H1 (cell line): ENCODE measurements at regions of chr16 and their contacts with region 1.

Region 1: GRCh38 chr16:1923299-1924034 is 5.3 kb upstream of the HS3ST6 start:
- DNase-seq: peak; percentile 49 to 86
- H3K4me3 ChIP-seq: peak overlapping the region in 1 of 4 experiments; percentile 47; a peak in 4 of 8 replicates
- H3K27ac ChIP-seq: no peak overlapping the region
- H3K4me1 ChIP-seq: peaks cover 4 to 23% (median 15%) of the 10 kb centered on the region in 4 experiments
- H3K27me3 ChIP-seq: peaks cover 23 to 62% (median 45%) of the 10 kb centered on the region in 4 experiments
- CTCF ChIP-seq: peak; percentile 56 to 66 (median 59)
- EP300 ChIP-seq: no peak
- POLR2A ChIP-seq: no peak
- RAD21 ChIP-seq: peak; percentile 28 to 45; a peak in 2 of 4 replicates

Region 2: DNA sequence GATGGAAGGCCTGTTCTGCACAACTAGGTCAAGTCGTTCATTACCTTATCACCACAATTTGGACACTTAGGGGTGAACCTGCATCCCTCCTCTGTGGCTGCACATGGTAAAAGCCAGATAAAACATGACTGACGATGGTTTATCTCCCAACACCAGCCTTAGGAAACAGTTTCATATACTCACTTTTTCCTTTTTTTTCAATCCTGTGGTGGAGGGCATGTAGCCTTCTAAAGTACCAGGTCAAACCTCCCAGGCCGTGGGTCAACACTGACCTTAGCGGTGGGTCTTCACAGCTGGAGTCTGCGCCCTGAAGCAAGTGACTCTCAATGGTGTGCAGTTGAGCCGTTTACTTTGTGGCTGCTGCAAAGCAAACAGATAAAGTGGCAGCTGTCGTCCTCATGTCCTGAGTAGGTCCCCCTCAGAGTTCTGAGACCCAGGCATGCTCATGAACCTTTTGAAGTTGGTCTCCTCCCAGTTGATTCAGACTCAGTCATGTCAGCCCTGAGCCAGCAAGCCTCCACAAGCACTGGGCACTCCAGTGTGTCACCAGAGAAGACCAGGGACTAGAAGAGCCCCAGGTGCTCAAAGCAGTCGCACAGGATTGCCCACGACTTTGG is 90.5 kb before region 1 on chr16:
- CTCF ChIA-PET with region 1: no interaction called
- POLR2A ChIA-PET with region 1: no interaction called
- DNase-seq: no peak
- H3K4me3 ChIP-seq: no peak overlapping the region
- H3K27ac ChIP-seq: no peak overlapping the region
- H3K4me1 ChIP-seq: no peaks in the 10 kb centered on the region; a peak in 1 of 7 replicates
- H3K27me3 ChIP-seq: no peaks in the 10 kb centered on the region; a peak in 1 of 7 replicates
- CTCF ChIP-seq: no peak
- EP300 ChIP-seq: no peak
- POLR2A ChIP-seq: no peak
- RAD21 ChIP-seq: no peak

Region 3: DNA sequence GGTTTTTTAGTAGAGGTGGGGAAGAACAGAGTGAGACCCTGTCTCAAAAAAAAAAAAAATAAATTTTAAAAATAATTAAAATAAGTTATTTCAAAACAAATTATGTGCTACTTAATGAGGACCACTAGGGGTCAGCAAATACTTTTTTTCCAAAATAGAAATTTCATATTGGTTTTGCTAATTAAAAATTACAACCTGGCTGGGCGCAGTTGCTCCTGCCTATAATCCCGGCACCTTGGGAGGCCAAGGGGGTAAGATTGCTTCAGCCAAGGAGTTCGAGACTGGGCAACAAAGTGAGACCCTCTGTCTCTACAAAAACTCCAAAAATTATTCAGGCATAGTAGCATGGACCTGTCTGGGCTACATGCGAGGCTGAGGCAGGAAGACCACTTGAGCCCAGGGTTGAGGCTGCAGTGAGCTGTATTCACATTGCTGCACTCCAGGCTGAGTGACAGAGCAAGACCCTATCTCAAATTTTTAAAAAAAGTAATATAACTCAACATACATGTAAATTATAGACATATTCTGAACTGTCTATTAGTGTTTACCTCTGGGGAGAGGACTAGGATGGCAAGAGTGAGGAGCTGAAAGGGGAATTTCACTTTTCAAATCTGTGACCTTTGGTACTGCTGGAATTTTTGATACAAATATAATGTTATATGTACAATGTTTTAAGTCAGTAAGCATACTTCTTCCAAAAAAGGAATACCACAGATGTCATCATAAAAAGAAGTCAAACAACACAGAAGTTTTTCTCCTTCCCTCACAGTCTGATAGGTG is 59.6 kb before region 1 on chr16:
- CTCF ChIA-PET with region 1: interaction called, 75 read pairs
- POLR2A ChIA-PET with region 1: interaction called, 3 read pairs
- DNase-seq: no peak
- H3K4me3 ChIP-seq: no peak overlapping the region
- H3K27ac ChIP-seq: no peak overlapping the region
- H3K4me1 ChIP-seq: no peaks in the 10 kb centered on the region
- H3K27me3 ChIP-seq: peaks cover 0 to 3% (median under 1%) of the 10 kb centered on the region in 4 experiments; a peak in 5 of 7 replicates
- CTCF ChIP-seq: peak in 2 of 3 experiments; percentile 8 to 31; a peak in 3 of 4 replicates
- EP300 ChIP-seq: no peak
- POLR2A ChIP-seq: no peak
- RAD21 ChIP-seq: peak; percentile 45 to 58

Region 4: GRCh38 chr16:1871974-1872635 is 51.4 kb before region 1 on chr16 and contains the start of gene MEIOB:
- CTCF ChIA-PET with region 1: interaction called, 75 read pairs
- POLR2A ChIA-PET with region 1: no interaction called
- DNase-seq: peak; percentile 41 to 96
- H3K4me3 ChIP-seq: peak within 1 kb of the TSS; percentile 31 to 62 (median 32); a peak in 7 of 8 replicates
- H3K27ac ChIP-seq: no peak within 1 kb of the TSS
- H3K4me1 ChIP-seq: peaks cover 0 to 4% (median 0%) of the 10 kb centered on the region in 4 experiments; a peak in 1 of 7 replicates
- H3K27me3 ChIP-seq: peaks cover 0 to 15% (median 6%) of the 10 kb centered on the region in 4 experiments; a peak in 6 of 7 replicates
- CTCF ChIP-seq: no peak
- EP300 ChIP-seq: no peak
- POLR2A ChIP-seq: no peak
- RAD21 ChIP-seq: no peak
- total RNA-seq, gene MEIOB: 0.99 and 1.1 TPM in 2 replicates

Region 5: GRCh38 chr16:1950047-1950446 is 26.6 kb after region 1 on chr16:
- CTCF ChIA-PET with region 1: interaction called, 10 read pairs
- POLR2A ChIA-PET with region 1: interaction called, 4 read pairs
- DNase-seq: no peak
- H3K4me3 ChIP-seq: no peak overlapping the region
- H3K27ac ChIP-seq: no peak overlapping the region
- H3K4me1 ChIP-seq: peaks cover 0 to 3% (median 0%) of the 10 kb centered on the region in 4 experiments; a peak in 3 of 7 replicates
- H3K27me3 ChIP-seq: no peaks in the 10 kb centered on the region
- CTCF ChIP-seq: no peak
- EP300 ChIP-seq: no peak
- POLR2A ChIP-seq: no peak
- RAD21 ChIP-seq: no peak